Activated CD4-positive, alpha-beta memory T cell treated with anti-CD3 and anti-CD28 coated beads for 36 hours (primary cell): ENCODE measurements at regions of chr1 and their contacts with region 1.

Region 1: DNA sequence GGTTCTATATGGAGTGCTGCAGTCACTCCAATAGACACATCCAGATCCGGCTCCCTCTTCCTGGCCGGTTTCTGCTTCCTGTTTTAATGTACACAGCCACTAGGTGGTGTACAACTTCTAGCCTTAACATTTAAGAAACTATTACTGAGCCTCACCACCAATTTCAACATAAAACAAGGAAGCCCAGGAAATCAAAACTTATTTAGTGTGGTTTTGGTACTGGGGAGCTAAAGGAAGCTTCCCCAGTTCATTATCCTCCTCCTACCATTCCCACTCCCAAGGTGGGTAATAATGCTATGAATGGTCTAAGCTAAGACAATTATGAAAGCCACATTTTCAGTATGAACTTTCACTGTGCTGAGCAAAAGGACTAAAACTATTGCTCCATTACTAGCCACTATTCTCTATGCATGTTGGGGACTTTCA is 25.5 kb upstream of the MTMR11 start:
- DNase-seq: peak; percentile 47
- H3K4me3 Mint-ChIP-seq: no peak overlapping the region
- H3K27ac Mint-ChIP-seq: peak overlapping the region; percentile 9
- H3K4me1 Mint-ChIP-seq: peaks cover 22% of the 10 kb centered on the region
- H3K27me3 Mint-ChIP-seq: no peaks in the 10 kb centered on the region

Region 2: DNA sequence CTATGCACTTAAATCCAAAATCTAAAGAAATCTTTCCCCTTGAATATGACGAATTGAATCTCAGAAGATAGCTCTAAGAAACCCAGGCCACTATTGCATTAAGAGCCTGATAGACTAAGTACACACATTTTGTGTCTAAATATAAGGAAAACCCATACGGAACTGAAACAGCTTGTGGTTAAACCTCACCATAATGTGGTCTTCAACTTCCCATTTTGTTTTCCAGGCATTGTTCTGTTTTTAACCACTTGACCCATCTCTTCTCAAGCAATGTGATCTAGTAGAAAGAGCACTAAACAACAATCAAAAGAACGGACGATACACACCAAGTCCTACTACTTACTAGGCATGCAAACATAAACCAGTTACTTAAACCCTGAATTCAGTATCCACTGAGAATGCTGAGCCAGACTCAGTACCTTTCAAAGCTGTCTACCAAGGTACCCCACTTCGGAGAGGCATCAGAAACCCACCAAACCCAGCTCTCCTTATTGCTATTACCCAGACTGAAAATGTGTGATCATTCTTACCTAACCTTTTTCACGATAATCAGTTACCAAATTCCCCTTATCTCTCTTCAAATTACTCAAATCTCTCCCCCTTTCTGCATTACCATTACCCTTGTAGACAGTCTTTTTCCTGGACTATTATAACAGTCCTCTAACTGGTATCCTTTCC is 35.6 kb after region 1 on chr1:
- CTCF ChIA-PET with region 1: interaction called, 12 read pairs
- POLR2A ChIA-PET with region 1: no interaction called
- intact Hi-C with region 1: loop called (anchors 1 kb)
- DNase-seq: peak; percentile 29
- H3K4me3 Mint-ChIP-seq: no peak overlapping the region
- H3K27ac Mint-ChIP-seq: peak overlapping the region; percentile 29
- H3K4me1 Mint-ChIP-seq: peaks cover 58% of the 10 kb centered on the region
- H3K27me3 Mint-ChIP-seq: no peaks in the 10 kb centered on the region

Region 3: GRCh38 chr1:150010393-150011115 is 48.4 kb after region 1 on chr1 and contains the start of gene OTUD7B:
- CTCF ChIA-PET with region 1: interaction called, 12 read pairs
- POLR2A ChIA-PET with region 1: no interaction called
- intact Hi-C with region 1: no loop called
- DNase-seq: peak; percentile 87
- H3K4me3 Mint-ChIP-seq: peak within 1 kb of the TSS; percentile 99
- H3K27ac Mint-ChIP-seq: peak within 1 kb of the TSS; percentile 98
- H3K4me1 Mint-ChIP-seq: peaks cover 39% of the 10 kb centered on the region
- H3K27me3 Mint-ChIP-seq: no peaks in the 10 kb centered on the region
- total RNA-seq, gene OTUD7B: 23.8 to 24.7 TPM

Region 4: DNA sequence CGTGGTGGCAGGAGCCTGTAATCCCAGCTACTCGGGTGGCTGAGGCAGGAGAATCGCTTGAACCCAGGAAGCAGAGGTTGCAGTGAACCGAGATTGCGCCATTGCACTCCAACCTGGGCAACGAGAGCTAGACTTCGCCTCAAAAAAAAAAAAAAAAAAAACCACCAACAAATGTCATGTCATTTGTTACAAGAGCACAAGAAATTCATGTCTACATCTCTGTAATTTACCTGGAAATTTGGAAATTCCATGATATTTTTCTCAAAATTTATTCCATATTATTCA is 88.9 kb after region 1 on chr1:
- CTCF ChIA-PET with region 1: interaction called, 31 read pairs
- POLR2A ChIA-PET with region 1: no interaction called
- intact Hi-C with region 1: loop called (anchors 1 kb)
- DNase-seq: no peak
- H3K4me3 Mint-ChIP-seq: no peak overlapping the region
- H3K27ac Mint-ChIP-seq: no peak overlapping the region
- H3K4me1 Mint-ChIP-seq: no peaks in the 10 kb centered on the region
- H3K27me3 Mint-ChIP-seq: no peaks in the 10 kb centered on the region

Region 5: DNA sequence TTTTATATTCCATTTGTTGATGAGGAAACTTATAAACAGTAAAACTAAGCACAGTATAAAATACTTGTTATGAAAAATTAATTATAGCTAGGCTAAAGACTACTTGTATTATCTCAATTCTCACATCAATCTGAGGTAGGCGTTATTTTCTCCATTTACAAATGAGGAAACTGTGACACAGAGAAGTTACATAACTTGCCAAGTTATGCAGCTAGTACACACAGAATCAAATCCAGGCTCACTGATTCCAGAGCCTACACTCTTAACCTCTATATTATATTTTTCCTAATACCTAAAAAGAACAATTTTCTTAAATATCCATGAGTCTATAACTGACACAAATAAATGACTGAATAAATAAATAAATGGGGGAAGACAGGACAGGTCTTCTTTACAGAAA is 94.3 kb after region 1 on chr1:
- CTCF ChIA-PET with region 1: interaction called, 31 read pairs
- POLR2A ChIA-PET with region 1: no interaction called
- intact Hi-C with region 1: no loop called
- DNase-seq: no peak
- H3K4me3 Mint-ChIP-seq: no peak overlapping the region
- H3K27ac Mint-ChIP-seq: no peak overlapping the region
- H3K4me1 Mint-ChIP-seq: no peaks in the 10 kb centered on the region
- H3K27me3 Mint-ChIP-seq: no peaks in the 10 kb centered on the region

Region 6: GRCh38 chr1:150162862-150163706 is 200.9 kb after region 1 on chr1:
- CTCF ChIA-PET with region 1: interaction called, 10 read pairs
- POLR2A ChIA-PET with region 1: no interaction called
- intact Hi-C with region 1: no loop called
- DNase-seq: no peak
- H3K4me3 Mint-ChIP-seq: no peak overlapping the region
- H3K27ac Mint-ChIP-seq: no peak overlapping the region
- H3K4me1 Mint-ChIP-seq: peaks cover 34% of the 10 kb centered on the region
- H3K27me3 Mint-ChIP-seq: no peaks in the 10 kb centered on the region

Region 7: DNA sequence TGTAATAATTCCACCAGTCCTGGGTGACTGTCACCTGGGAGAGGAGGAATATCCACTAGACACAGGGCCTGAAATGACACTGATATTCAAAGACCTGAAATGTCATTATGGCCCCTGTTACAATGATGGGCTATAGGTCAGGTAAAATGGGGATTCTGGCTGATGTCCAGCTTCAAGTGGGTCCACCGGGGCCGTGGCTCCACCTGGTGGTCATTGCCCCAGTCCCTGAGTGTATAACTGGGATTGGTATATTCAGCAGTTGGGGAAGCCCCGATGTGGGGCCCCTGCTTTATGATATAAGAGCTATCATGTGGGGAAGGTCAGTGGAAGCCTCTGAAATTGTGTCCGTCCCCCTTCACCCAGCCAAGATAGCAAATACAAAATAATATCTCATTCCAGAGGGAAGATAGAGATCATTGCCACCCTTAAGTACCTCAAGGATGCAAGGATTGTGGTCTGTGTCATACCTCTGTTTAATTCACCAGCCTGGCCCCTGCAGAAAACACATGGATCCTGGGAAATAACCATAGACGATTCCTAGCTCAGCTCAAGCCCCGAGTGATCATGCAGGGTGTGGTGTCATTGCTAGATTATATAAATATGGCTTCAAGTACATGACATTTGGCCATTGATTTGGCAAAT is 206.9 kb after region 1 on chr1:
- CTCF ChIA-PET with region 1: interaction called, 10 read pairs
- POLR2A ChIA-PET with region 1: no interaction called
- intact Hi-C with region 1: loop called (anchors 1 kb)
- DNase-seq: peak; percentile 76
- H3K4me3 Mint-ChIP-seq: no peak overlapping the region
- H3K27ac Mint-ChIP-seq: no peak overlapping the region
- H3K4me1 Mint-ChIP-seq: no peaks in the 10 kb centered on the region
- H3K27me3 Mint-ChIP-seq: no peaks in the 10 kb centered on the region